Naive thymus-derived CD4-positive, alpha-beta T cell (primary cell): ENCODE measurements at regions of chr17 and their contacts with region 1.

Region 1: GRCh38 chr17:12256380-12256995 is 235.8 kb downstream of the MAP2K4 start:
- DNase-seq: no peak
- ATAC-seq: no peak
- H3K4me3 ChIP-seq: no peak overlapping the region
- H3K4me3 Mint-ChIP-seq: no peak overlapping the region
- H3K27ac ChIP-seq: no peak overlapping the region
- H3K27ac Mint-ChIP-seq: no peak overlapping the region
- H3K4me1 ChIP-seq: no peaks in the 10 kb centered on the region
- H3K4me1 Mint-ChIP-seq: no peaks in the 10 kb centered on the region
- H3K27me3 ChIP-seq: peaks cover 0 to 4% of the 10 kb centered on the region in 2 donors
- H3K27me3 Mint-ChIP-seq: peaks cover 0 to 7% (median 2%) of the 10 kb centered on the region in 5 donors

Region 2: DNA sequence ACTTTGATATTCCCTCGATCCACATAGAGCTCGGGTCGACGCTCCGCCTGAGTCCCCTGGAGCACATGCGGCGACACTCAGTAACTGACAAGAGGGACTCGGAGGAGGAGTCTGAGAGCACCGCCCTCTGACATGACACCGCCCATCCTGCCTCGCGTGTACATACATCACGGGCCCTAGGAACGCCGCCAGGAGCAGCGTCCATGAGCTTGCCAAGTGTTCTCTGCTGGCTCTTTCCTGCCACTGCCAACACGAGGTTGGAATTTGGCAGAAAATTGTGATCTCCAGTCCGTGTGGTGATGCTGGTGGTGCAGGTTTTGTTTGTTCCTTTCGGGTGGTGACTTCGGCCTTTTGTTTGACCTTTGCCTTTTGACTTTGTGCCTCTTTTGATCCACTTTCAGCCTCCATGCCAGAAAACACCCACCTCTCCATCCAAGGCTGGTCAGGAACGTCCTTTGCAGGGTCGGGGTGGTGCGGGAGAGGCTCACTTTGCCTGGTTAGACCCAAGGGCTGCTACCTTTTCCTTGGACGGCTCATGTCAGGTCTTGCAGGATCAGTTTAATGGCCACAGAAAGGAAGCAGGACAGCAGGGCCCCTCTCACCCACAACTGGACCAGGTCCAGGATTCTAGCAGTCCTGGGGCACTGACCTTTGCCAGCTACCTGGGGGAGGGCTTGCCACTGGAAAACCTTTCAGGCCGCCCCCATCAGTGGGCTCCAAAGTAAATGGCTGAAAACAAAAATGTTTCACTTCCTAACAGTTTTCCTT is 733.7 kb after region 1 on chr17:
- CTCF ChIA-PET with region 1: no interaction called
- POLR2A ChIA-PET with region 1: no interaction called
- intact Hi-C with region 1: loop called in 1 of 2 experiments (anchors 5 kb)
- DNase-seq: no peak
- ATAC-seq: no peak
- H3K4me3 ChIP-seq: no peak overlapping the region
- H3K4me3 Mint-ChIP-seq: peak overlapping the region in 1 of 10 donors; percentile 1
- H3K27ac ChIP-seq: no peak overlapping the region
- H3K27ac Mint-ChIP-seq: peak overlapping the region in 3 of 9 donors; percentile 51 to 81 (median 71)
- H3K4me1 ChIP-seq: no peaks in the 10 kb centered on the region
- H3K4me1 Mint-ChIP-seq: no peaks in the 10 kb centered on the region
- H3K27me3 ChIP-seq: no peaks in the 10 kb centered on the region
- H3K27me3 Mint-ChIP-seq: no peaks in the 10 kb centered on the region